HCT116 (cell line): ENCODE measurements at regions of chr6 and their contacts with region 1.

Region 1: GRCh38 chr6:912871-913835 is 220.2 kb upstream of the EXOC2 start:
- DNase-seq: peak; percentile 22
- ATAC-seq: peak; percentile 90
- H3K4me3 ChIP-seq: no peak overlapping the region
- H3K27ac ChIP-seq: no peak overlapping the region
- H3K4me1 ChIP-seq: no peaks in the 10 kb centered on the region
- H3K27me3 ChIP-seq: no peaks in the 10 kb centered on the region
- CTCF ChIP-seq: peak; percentile 29 to 61 (median 38); a peak in 5 of 6 replicates
- POLR2A ChIP-seq: no peak
- RAD21 ChIP-seq: peak; percentile 69

Region 2: GRCh38 chr6:1335367-1336037 is 422.3 kb after region 1 on chr6:
- CTCF ChIA-PET with region 1: interaction called, 19 read pairs
- POLR2A ChIA-PET with region 1: interaction called, 3 read pairs
- RAD21 ChIA-PET with region 1: interaction called, 8 to 9 read pairs
- intact Hi-C with region 1: loop called (anchors 1 kb)
- DNase-seq: peak; percentile 87
- ATAC-seq: peak; percentile 92
- H3K4me3 ChIP-seq: peak overlapping the region; percentile 10 to 40; a peak in 3 of 4 replicates
- H3K27ac ChIP-seq: peak overlapping the region; percentile 63
- H3K4me1 ChIP-seq: peaks cover 9 to 33% of the 10 kb centered on the region in 2 experiments; a peak in 3 of 4 replicates
- H3K27me3 ChIP-seq: no peaks in the 10 kb centered on the region
- CTCF ChIP-seq: no peak
- POLR2A ChIP-seq: no peak
- RAD21 ChIP-seq: peak; percentile 48

Region 3: DNA sequence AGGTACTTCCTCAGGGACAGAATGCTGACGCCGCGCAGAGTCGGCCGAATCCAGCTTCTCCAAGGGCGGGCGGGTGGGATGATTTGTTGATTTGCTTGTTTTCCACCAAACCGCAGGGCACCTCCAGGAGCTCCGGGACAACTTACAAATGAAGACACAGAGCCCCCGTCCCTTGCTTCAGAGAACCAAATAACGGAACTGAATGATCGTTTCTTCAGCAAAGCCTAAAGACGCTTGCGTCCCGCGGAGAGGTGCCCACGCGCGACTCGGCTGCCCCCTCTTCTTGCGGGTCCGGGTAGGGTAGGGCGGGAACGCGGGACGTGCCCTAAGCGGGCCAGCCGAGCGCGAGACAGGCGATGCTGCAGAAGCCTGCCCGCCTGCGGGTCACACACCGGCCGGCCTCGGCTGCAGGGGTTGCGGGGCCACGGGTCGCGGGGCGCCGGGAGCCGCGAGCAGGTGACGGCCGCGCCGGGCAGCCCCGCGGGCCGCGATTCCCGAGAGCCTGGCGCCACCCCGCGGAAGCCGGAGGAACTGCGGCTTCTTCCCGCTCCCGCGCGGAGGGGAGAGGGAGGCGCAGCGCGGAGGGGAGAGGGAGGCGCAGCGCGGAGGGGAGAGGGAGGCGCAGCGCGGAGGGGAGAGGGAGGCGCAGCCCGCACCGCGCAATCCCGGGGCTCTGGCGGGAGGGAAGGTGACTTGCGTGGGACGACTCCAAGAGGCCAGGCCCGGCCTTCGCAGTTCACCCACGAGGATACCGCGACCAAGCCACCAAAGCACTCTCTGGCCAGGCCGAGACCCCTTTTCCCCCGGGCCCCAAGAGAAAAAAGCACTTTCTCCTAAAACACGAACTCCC is 468.6 kb after region 1 on chr6:
- CTCF ChIA-PET with region 1: interaction called, 8 read pairs
- POLR2A ChIA-PET with region 1: no interaction called
- RAD21 ChIA-PET with region 1: interaction called in 1 of 2 experiments, 3 read pairs
- intact Hi-C with region 1: loop called (anchors 5 kb)
- DNase-seq: no peak
- ATAC-seq: peak; percentile 95
- H3K4me3 ChIP-seq: peak overlapping the region in 1 of 2 experiments; percentile 26; a peak in 1 of 4 replicates
- H3K27ac ChIP-seq: no peak overlapping the region
- H3K4me1 ChIP-seq: peaks cover 0 to 8% of the 10 kb centered on the region in 2 experiments; a peak in 1 of 4 replicates
- H3K27me3 ChIP-seq: no peaks in the 10 kb centered on the region
- CTCF ChIP-seq: peak; percentile 44 to 69 (median 68); a peak in 4 of 6 replicates
- POLR2A ChIP-seq: no peak
- RAD21 ChIP-seq: peak; percentile 76

Region 4: GRCh38 chr6:2127484-2127911 is 1214.3 kb after region 1 on chr6:
- CTCF ChIA-PET with region 1: no interaction called
- POLR2A ChIA-PET with region 1: no interaction called
- RAD21 ChIA-PET with region 1: no interaction called
- intact Hi-C with region 1: no loop called
- DNase-seq: no peak
- ATAC-seq: no peak
- H3K4me3 ChIP-seq: no peak overlapping the region
- H3K27ac ChIP-seq: no peak overlapping the region
- H3K4me1 ChIP-seq: peaks cover 7 to 9% of the 10 kb centered on the region in 2 experiments; a peak in 3 of 4 replicates
- H3K27me3 ChIP-seq: no peaks in the 10 kb centered on the region
- CTCF ChIP-seq: no peak
- POLR2A ChIP-seq: no peak
- RAD21 ChIP-seq: no peak